Gastrocnemius medialis (tissue), 4 donors: ENCODE measurements at regions of chr7 and their contacts with region 1.

Region 1: GRCh38 chr7:32357535-32358277 is 132.5 kb downstream of the LSM5 start:
- DNase-seq: no peak
- ATAC-seq: no peak
- H3K4me3 ChIP-seq: no peak overlapping the region
- H3K27ac ChIP-seq: no peak overlapping the region
- H3K4me1 ChIP-seq: no peaks in the 10 kb centered on the region
- H3K27me3 ChIP-seq: no peaks in the 10 kb centered on the region
- CTCF ChIP-seq: no peak
- POLR2A ChIP-seq: no peak

Region 2: DNA sequence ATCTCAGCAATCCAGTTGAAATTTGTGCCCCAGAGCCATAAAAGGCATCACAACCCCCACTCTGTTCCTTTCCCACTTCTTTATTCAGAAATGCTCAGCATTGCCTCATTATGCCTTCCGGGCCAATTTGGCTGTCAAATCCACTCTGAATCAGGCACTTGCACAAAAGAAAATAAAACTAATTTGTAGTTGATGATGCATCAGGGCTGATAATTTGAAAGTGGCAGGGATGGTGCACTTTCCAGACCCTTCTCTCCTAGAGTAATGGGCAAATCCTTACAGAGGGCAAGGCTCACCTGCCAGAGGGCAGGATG is 139.6 kb before region 1 on chr7:
- in situ Hi-C with region 1: loop called in 1 of 4 experiments (anchors 10 kb)
- intact Hi-C with region 1: no loop called
- DNase-seq: no peak
- ATAC-seq: no peak
- H3K4me3 ChIP-seq: no peak overlapping the region
- H3K27ac ChIP-seq: no peak overlapping the region
- H3K4me1 ChIP-seq: no peaks in the 10 kb centered on the region
- H3K27me3 ChIP-seq: no peaks in the 10 kb centered on the region
- CTCF ChIP-seq: no peak
- POLR2A ChIP-seq: no peak

Region 3: DNA sequence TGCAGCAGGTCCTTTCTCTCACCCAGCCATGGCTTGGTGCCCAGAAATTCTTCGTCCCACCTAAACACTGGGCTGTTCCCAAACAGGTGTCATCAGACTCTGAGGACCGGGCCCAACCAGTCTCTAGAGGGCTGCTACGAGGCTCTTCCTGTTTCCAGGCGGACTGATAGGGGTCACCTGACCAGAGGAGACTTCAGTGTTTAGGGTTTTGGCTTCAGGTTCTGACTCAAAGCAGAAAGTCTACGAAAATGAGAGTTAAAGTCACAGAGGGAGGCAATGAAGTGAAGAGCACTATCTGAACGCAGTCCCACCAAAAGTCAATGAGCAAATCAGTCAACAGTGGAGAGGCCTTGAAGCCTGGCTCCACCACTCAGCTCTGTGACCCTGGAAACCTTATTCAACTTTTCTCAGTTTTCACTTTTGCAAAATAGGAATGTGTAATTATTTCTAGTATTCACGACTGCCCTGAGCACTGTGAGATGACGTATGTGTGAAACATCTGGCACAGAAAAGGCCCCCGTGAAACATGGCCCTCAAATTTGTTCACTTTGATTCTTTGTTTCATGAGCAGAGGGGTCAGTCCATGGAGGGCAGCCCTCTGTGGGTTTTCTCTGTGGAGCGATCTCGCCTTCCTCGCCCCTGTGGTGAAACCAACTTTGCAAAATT is 97.6 kb before region 1 on chr7:
- in situ Hi-C with region 1: no loop called
- intact Hi-C with region 1: no loop called
- DNase-seq: no peak
- ATAC-seq: no peak
- H3K4me3 ChIP-seq: no peak overlapping the region
- H3K27ac ChIP-seq: no peak overlapping the region
- H3K4me1 ChIP-seq: no peaks in the 10 kb centered on the region
- H3K27me3 ChIP-seq: no peaks in the 10 kb centered on the region
- CTCF ChIP-seq: no peak
- POLR2A ChIP-seq: no peak

Region 4: GRCh38 chr7:32410545-32410944 is 52.8 kb after region 1 on chr7:
- in situ Hi-C with region 1: no loop called
- intact Hi-C with region 1: no loop called
- DNase-seq: no peak
- ATAC-seq: no peak
- H3K4me3 ChIP-seq: no peak overlapping the region
- H3K27ac ChIP-seq: no peak overlapping the region
- H3K4me1 ChIP-seq: no peaks in the 10 kb centered on the region
- H3K27me3 ChIP-seq: no peaks in the 10 kb centered on the region
- CTCF ChIP-seq: no peak
- POLR2A ChIP-seq: no peak